K562 (cell line): ENCODE measurements at regions of chrX and their contacts with region 1.

Region 1: GRCh38 chrX:43557792-43558191 is 98.3 kb upstream of the MAOA start:
- DNase-seq: peak; percentile 38 to 62 (median 46)
- ATAC-seq: peak; percentile 66; the same call in 2 of the 3 replicates
- H3K4me3 ChIP-seq: no peak overlapping the region
- H3K27ac ChIP-seq: no peak overlapping the region
- H3K4me1 ChIP-seq: no peaks in the 10 kb centered on the region; a peak in 1 of 5 replicates
- H3K27me3 ChIP-seq: no peaks in the 10 kb centered on the region
- CTCF ChIP-seq: peak; percentile 43 to 71 (median 54); a peak in 4 of 6 replicates
- EP300 ChIP-seq: no peak
- POLR2A ChIP-seq: no peak
- RAD21 ChIP-seq: peak; percentile 67 to 76

Region 2: DNA sequence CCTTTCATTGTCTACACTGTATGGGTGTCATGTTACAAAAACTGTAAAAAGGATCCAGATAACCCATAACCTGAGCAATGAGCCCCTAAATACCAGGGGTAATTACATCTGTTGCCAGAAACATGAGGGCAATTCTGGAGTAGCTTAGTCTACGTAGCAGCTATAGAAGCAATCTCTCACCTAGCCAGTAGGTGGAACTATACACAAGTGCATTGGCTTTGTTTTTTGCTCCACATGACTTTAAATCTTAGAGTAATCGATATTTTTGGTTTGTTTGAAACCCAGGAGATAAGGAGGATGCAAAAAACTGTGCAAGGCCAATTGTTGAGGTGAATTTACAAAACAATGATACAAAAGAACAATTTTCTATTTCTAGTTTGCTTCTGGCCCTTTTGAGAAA is 1776.3 kb before region 1 on chrX:
- CTCF ChIA-PET with region 1: no interaction called
- POLR2A ChIA-PET with region 1: no interaction called
- in situ Hi-C with region 1: loop called (anchors 25 kb)
- intact Hi-C with region 1: loop called (anchors 2 kb)
- DNase-seq: peak; percentile 15 to 34 (median 28)
- ATAC-seq: peak; percentile 74
- H3K4me3 ChIP-seq: no peak overlapping the region
- H3K27ac ChIP-seq: no peak overlapping the region
- H3K4me1 ChIP-seq: no peaks in the 10 kb centered on the region
- H3K27me3 ChIP-seq: no peaks in the 10 kb centered on the region
- CTCF ChIP-seq: peak; percentile 24 to 59 (median 57); a peak in 4 of 6 replicates
- EP300 ChIP-seq: no peak
- POLR2A ChIP-seq: no peak
- RAD21 ChIP-seq: peak; percentile 56 to 79

Region 3: GRCh38 chrX:43474305-43474704 is 83.5 kb before region 1 on chrX:
- CTCF ChIA-PET with region 1: no interaction called
- POLR2A ChIA-PET with region 1: no interaction called
- in situ Hi-C with region 1: no loop called
- intact Hi-C with region 1: loop called (anchors 10 kb)
- DNase-seq: no peak
- ATAC-seq: no peak
- H3K4me3 ChIP-seq: no peak overlapping the region
- H3K27ac ChIP-seq: no peak overlapping the region
- H3K4me1 ChIP-seq: no peaks in the 10 kb centered on the region
- H3K27me3 ChIP-seq: no peaks in the 10 kb centered on the region
- CTCF ChIP-seq: no peak
- EP300 ChIP-seq: no peak
- POLR2A ChIP-seq: no peak
- RAD21 ChIP-seq: no peak

Region 4: GRCh38 chrX:43750248-43750676 is 192.5 kb after region 1 on chrX:
- CTCF ChIA-PET with region 1: interaction called, 6 read pairs
- POLR2A ChIA-PET with region 1: no interaction called
- in situ Hi-C with region 1: loop called (anchors 10 kb)
- intact Hi-C with region 1: loop called (anchors 1 kb)
- DNase-seq: peak; percentile 37 to 55 (median 40)
- ATAC-seq: peak; percentile 86
- H3K4me3 ChIP-seq: no peak overlapping the region
- H3K27ac ChIP-seq: no peak overlapping the region
- H3K4me1 ChIP-seq: no peaks in the 10 kb centered on the region
- H3K27me3 ChIP-seq: peaks cover 0 to under 1% of the 10 kb centered on the region in 2 experiments; a peak in 1 of 5 replicates
- CTCF ChIP-seq: peak; percentile 47 to 68 (median 55)
- EP300 ChIP-seq: no peak
- POLR2A ChIP-seq: no peak
- RAD21 ChIP-seq: peak; percentile 73 to 82

Region 5: DNA sequence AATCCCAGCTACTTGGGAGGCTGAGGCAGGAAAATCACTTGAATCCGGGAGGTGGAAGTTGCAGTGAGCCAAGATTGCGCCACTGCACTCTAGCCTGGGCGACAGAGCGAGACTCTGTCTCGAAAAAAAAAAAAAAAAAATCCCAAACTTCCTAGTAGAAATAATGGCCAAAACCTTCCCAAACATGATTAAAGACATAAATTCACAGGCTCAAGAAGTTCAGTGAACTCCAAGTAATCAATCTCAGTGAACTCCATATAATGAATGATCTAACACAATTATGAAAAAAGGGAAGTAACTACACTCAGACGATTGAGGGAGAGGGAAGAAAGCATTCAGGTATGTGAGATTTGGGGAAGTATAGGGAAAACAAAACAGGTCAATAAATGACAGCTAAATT is 978.4 kb after region 1 on chrX:
- CTCF ChIA-PET with region 1: no interaction called
- POLR2A ChIA-PET with region 1: no interaction called
- in situ Hi-C with region 1: no loop called
- intact Hi-C with region 1: no loop called
- DNase-seq: no peak
- ATAC-seq: no peak
- H3K4me3 ChIP-seq: no peak overlapping the region
- H3K27ac ChIP-seq: no peak overlapping the region
- H3K4me1 ChIP-seq: peaks cover 0 to 4% of the 10 kb centered on the region in 2 experiments; a peak in 2 of 5 replicates
- H3K27me3 ChIP-seq: no peaks in the 10 kb centered on the region
- CTCF ChIP-seq: no peak
- EP300 ChIP-seq: no peak
- POLR2A ChIP-seq: no peak
- RAD21 ChIP-seq: no peak